ENCODE measurements at regions of chr12 and their contacts with region 1.

Region 1: GRCh38 chr12:26434299-26435068 is 239.1 kb downstream of the SSPN start:
- DNase-seq: peak; percentile 40 to 55
- H3K4me3 ChIP-seq: no peak overlapping the region
- H3K27ac ChIP-seq: no peak overlapping the region
- H3K4me1 ChIP-seq: peaks cover 5% of the 10 kb centered on the region; the same call in 1 of the 2 replicates
- H3K27me3 ChIP-seq: no peaks in the 10 kb centered on the region
- CTCF ChIP-seq: peak; percentile 69

Region 2: GRCh38 chr12:25365340-25365730 is 1069.1 kb before region 1 on chr12:
- CTCF ChIA-PET with region 1: no interaction called
- POLR2A ChIA-PET with region 1: no interaction called
- intact Hi-C with region 1: no loop called
- DNase-seq: no peak
- H3K4me3 ChIP-seq: no peak overlapping the region
- H3K27ac ChIP-seq: no peak overlapping the region
- H3K4me1 ChIP-seq: no peaks in the 10 kb centered on the region
- H3K27me3 ChIP-seq: no peaks in the 10 kb centered on the region
- CTCF ChIP-seq: no peak

Region 3: DNA sequence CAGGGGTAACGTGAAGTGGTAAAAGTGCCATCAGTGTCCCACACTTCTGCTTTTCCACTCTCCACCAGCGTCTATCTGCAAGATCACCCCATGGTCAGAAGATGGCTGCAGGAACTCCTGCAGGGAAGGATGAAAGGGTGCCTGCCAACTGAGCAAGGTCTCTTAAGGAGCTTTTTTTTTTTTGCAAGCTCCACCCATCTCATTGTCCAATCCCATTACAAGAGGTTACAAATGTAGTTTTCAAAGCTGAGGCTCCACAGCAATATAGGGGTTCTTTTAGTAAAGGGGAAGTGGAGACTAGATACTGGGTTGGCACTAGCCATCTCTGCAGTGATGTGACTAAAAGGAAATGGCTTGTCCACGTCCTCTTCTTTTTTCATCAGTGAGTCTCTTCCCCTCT is 303.8 kb before region 1 on chr12:
- CTCF ChIA-PET with region 1: no interaction called
- POLR2A ChIA-PET with region 1: no interaction called
- intact Hi-C with region 1: no loop called
- DNase-seq: no peak
- H3K4me3 ChIP-seq: no peak overlapping the region
- H3K27ac ChIP-seq: no peak overlapping the region
- H3K4me1 ChIP-seq: peaks cover 49% of the 10 kb centered on the region
- H3K27me3 ChIP-seq: no peaks in the 10 kb centered on the region
- CTCF ChIP-seq: no peak

Region 4: GRCh38 chr12:26651566-26652188 is 217.2 kb after region 1 on chr12:
- CTCF ChIA-PET with region 1: no interaction called
- POLR2A ChIA-PET with region 1: no interaction called
- intact Hi-C with region 1: loop called (anchors 1 kb)
- DNase-seq: peak; percentile 67 to 77
- H3K4me3 ChIP-seq: no peak overlapping the region
- H3K27ac ChIP-seq: no peak overlapping the region
- H3K4me1 ChIP-seq: peaks cover 12% of the 10 kb centered on the region; the same call in 1 of the 2 replicates
- H3K27me3 ChIP-seq: no peaks in the 10 kb centered on the region
- CTCF ChIP-seq: peak; percentile 97

Measured in PC-9 (cell line).